ENCODE measurements at regions of chr5 and their contacts with region 1.

Region 1: DNA sequence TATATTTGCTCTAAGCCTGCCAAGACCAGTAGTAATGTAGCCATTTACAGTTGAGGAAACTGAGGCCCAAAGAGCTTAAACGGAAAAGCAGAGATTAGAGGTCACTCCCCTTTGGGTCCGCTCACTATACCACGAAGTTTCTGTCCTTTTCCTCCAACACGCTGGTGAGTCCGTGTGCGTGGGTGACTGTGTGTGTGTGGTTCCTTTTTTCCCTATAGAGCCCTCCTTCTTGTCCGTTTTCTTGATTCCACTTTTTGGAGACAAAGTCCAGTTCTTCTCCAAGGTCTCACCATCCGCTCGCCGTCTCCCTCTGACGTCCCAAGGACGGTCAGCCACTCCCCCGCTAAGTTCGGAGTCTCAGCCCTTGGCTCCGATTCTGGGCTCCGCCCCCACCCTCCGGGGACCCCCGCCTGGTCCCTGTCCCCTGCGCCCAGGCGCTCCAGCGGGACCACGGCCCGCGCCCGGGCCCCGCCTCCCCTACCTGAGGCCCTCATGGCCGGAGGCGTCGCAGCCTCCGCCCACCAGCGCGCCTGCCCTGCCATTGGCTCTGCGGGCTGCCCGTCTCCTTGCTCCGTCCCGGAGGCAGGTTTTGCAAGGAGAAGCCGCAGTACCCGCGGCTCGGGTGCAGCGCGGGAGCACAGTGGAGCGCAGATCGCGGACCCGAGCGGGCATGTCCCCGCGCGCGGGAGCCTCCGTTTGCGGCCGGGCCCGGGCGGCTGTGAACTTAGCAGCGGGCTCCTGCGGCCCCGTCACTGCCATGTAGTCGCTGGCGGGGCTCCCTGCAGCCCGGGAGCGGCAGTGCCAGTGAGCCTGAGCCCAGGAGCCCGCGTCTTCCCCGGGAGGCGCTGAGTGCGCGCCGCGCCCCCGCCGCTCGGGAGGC is at the start of gene MAST4:
- DNase-seq: peak; percentile 79
- ATAC-seq: peak; percentile 96
- H3K4me3 Mint-ChIP-seq: peak within 1 kb of the TSS; percentile 83
- H3K27ac Mint-ChIP-seq: no peak within 1 kb of the TSS
- H3K4me1 Mint-ChIP-seq: peaks cover 22% of the 10 kb centered on the region
- H3K27me3 Mint-ChIP-seq: peaks cover 32% of the 10 kb centered on the region
- CTCF ChIP-seq: no peak
- total RNA-seq, gene MAST4: 10.3 and 17.2 TPM in 2 replicates

Region 2: GRCh38 chr5:66469684-66470083 is 126.3 kb before region 1 on chr5:
- CTCF ChIA-PET with region 1: no interaction called
- POLR2A ChIA-PET with region 1: no interaction called
- intact Hi-C with region 1: loop called (anchors 1 kb)
- DNase-seq: no peak
- ATAC-seq: no peak
- H3K4me3 Mint-ChIP-seq: no peak overlapping the region
- H3K27ac Mint-ChIP-seq: no peak overlapping the region
- H3K4me1 Mint-ChIP-seq: peaks cover 15% of the 10 kb centered on the region
- H3K27me3 Mint-ChIP-seq: no peaks in the 10 kb centered on the region
- CTCF ChIP-seq: no peak

Region 3: DNA sequence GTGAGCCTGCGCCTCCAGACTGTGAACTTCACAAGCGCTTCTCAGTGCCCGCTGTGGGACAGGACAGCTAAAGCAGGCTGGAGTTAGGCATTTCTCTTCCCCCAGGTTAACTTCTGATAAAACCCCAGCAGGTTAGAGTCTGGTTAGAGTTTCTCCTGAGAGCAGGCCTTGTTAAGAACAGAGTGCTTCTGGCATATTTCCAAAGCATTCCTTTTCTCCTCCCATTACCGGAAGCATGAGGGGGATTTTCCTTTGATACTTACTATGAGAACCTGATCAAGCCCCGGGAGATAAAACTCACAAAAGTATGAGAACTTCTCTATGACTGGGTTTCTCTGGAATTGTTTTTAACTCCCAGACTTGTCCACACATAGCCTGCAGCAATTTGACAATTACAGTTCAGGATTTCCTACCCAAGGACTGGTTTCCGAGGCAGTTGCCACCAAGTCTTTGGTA is 77.3 kb before region 1 on chr5:
- CTCF ChIA-PET with region 1: interaction called, 3 read pairs
- POLR2A ChIA-PET with region 1: no interaction called
- intact Hi-C with region 1: loop called (anchors 1 kb)
- DNase-seq: no peak
- ATAC-seq: no peak
- H3K4me3 Mint-ChIP-seq: no peak overlapping the region
- H3K27ac Mint-ChIP-seq: no peak overlapping the region
- H3K4me1 Mint-ChIP-seq: peaks cover 39% of the 10 kb centered on the region
- H3K27me3 Mint-ChIP-seq: no peaks in the 10 kb centered on the region
- CTCF ChIP-seq: no peak

Region 4: GRCh38 chr5:66617226-66617861 is 21.3 kb after region 1 on chr5:
- CTCF ChIA-PET with region 1: no interaction called
- POLR2A ChIA-PET with region 1: no interaction called
- intact Hi-C with region 1: loop called (anchors 1 kb)
- DNase-seq: no peak
- ATAC-seq: peak; percentile 58
- H3K4me3 Mint-ChIP-seq: peak overlapping the region; percentile 63
- H3K27ac Mint-ChIP-seq: peak overlapping the region; percentile 79
- H3K4me1 Mint-ChIP-seq: peaks cover 47% of the 10 kb centered on the region
- H3K27me3 Mint-ChIP-seq: no peaks in the 10 kb centered on the region
- CTCF ChIP-seq: no peak

Measured in activated B cell treated with CpG ODN at 0.5 μM for 24 hours (primary cell).